ENCODE measurements at regions of chr20 and their contacts with region 1.

Region 1: GRCh38 chr20:32902456-32903420 is 44.0 kb downstream of the EFCAB8 start:
- DNase-seq: peak; percentile 86
- ATAC-seq: peak; percentile 86
- H3K4me3 Mint-ChIP-seq: no peak overlapping the region
- H3K27ac Mint-ChIP-seq: peak overlapping the region; percentile 58
- H3K4me1 Mint-ChIP-seq: peaks cover 25% of the 10 kb centered on the region
- H3K27me3 Mint-ChIP-seq: no peaks in the 10 kb centered on the region

Region 2: GRCh38 chr20:32762149-32762753 is 140.5 kb before region 1 on chr20 and contains the start of gene DNMT3B:
- CTCF ChIA-PET with region 1: no interaction called
- POLR2A ChIA-PET with region 1: no interaction called
- intact Hi-C with region 1: no loop called
- DNase-seq: peak; percentile 81
- ATAC-seq: peak; percentile 74
- H3K4me3 Mint-ChIP-seq: peak within 1 kb of the TSS; percentile 74
- H3K27ac Mint-ChIP-seq: peak within 1 kb of the TSS; percentile 22
- H3K4me1 Mint-ChIP-seq: peaks cover 10% of the 10 kb centered on the region
- H3K27me3 Mint-ChIP-seq: peaks cover 7% of the 10 kb centered on the region
- total RNA-seq, gene DNMT3B: 1.4 to 1.6 TPM

Region 3: DNA sequence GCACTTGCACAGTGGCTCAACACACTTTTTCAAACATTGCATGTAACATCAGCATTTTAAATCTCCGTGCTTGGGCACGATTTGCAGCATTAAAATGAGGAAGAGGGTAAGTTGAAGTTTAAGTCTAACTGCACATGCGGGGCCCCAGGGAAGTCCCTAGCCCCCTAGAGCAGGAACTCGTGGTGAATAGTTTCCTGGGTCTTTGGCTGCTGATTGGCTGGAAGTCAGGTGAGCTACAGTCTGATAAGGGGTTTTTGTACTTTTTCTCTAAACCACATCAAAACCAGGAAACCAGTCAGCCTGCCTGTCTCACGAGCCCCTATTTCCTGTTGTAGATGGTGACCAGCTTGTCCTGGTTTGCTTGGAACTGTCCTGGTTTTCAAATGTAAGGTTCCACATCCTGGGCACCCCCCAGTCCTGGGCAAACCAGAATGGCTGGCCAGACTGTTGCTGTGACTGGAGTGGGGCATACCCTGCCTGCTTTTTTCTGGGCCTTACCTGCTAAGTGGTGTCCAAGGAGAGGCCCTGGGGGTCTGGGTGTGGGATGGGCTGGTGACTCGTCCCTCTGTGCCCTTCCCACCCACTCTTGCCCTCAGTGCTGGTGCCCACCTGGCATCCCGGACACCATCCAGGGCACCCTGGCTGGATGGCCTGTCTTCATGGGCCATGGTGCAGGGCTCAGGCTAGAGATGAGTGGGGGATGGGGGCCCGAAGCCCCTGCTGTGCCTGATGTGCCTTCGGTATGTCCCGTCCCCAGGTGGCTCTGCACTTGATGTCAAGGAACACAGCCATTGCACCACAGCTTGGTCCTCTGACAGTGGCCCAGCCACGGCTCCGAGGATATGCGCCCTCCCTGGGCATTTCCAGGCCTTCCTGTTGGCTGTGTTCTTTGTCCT is 69.7 kb after region 1 on chr20:
- CTCF ChIA-PET with region 1: interaction called, 10 read pairs
- POLR2A ChIA-PET with region 1: interaction called, 4 read pairs
- intact Hi-C with region 1: no loop called
- DNase-seq: peak; percentile 88
- ATAC-seq: peak; percentile 70
- H3K4me3 Mint-ChIP-seq: no peak overlapping the region
- H3K27ac Mint-ChIP-seq: no peak overlapping the region
- H3K4me1 Mint-ChIP-seq: peaks cover 46% of the 10 kb centered on the region
- H3K27me3 Mint-ChIP-seq: no peaks in the 10 kb centered on the region

Region 4: DNA sequence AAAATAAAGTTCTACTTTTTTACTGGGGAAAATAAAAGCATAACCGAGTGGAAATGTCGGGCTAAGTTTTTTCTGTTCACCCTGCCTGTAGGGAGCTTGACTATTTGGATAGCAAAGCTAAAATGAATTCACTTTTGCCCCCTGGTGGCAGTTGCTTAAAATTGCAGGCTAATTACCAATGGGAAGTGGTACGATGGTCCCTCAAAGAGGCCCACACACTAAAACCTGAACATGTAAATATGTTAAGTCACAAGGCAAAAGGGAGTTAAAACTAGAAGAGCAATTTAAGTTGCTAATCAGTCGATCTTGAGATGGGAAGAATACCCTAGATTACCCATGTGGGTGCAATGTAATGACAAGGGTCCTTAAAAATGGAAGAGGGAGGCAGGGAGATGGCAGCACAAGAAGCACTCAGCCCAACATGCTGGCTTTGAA is 102.4 kb after region 1 on chr20:
- CTCF ChIA-PET with region 1: interaction called, 43 read pairs
- POLR2A ChIA-PET with region 1: no interaction called
- intact Hi-C with region 1: loop called (anchors 1 kb)
- DNase-seq: peak; percentile 59
- ATAC-seq: peak; percentile 78
- H3K4me3 Mint-ChIP-seq: no peak overlapping the region
- H3K27ac Mint-ChIP-seq: no peak overlapping the region
- H3K4me1 Mint-ChIP-seq: peaks cover 14% of the 10 kb centered on the region
- H3K27me3 Mint-ChIP-seq: no peaks in the 10 kb centered on the region

Region 5: DNA sequence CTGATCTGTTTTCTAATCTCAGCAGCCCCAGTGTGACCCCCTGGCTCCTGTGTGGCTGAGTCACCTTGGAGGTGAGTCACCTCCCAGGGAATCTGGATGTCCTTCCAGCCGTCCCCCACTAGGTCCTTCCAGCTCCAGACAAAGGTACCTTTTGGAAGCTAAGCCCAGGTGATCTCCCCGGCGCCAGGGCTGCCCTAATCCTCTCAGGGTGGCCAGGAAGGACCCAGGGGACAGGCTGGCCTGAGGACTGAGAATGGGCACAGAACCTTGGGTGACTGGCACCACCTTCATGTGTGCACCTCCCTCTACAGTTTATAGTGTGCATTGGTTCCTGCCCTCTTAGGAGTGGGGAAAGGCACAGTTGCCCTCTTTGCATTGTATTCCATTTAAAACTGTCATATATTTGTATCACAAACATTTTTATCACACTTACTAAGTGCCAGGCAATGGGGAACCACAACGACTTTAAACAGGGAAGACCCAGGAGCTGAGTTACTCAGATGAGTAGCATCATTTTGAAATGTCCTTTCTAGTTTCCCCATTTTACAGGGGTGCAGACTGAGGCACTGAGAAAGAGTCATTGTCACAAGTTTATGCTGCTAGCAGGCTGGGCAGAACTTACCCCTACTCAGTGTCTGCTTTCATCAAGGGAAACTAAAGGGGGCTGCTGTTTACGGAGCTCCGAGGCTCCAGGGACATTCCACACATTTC is 174.1 kb after region 1 on chr20:
- CTCF ChIA-PET with region 1: interaction called, 3 read pairs
- POLR2A ChIA-PET with region 1: no interaction called
- intact Hi-C with region 1: loop called (anchors 1 kb)
- DNase-seq: peak; percentile 14
- ATAC-seq: no peak
- H3K4me3 Mint-ChIP-seq: no peak overlapping the region
- H3K27ac Mint-ChIP-seq: no peak overlapping the region
- H3K4me1 Mint-ChIP-seq: peaks cover 2% of the 10 kb centered on the region
- H3K27me3 Mint-ChIP-seq: no peaks in the 10 kb centered on the region

Region 6: DNA sequence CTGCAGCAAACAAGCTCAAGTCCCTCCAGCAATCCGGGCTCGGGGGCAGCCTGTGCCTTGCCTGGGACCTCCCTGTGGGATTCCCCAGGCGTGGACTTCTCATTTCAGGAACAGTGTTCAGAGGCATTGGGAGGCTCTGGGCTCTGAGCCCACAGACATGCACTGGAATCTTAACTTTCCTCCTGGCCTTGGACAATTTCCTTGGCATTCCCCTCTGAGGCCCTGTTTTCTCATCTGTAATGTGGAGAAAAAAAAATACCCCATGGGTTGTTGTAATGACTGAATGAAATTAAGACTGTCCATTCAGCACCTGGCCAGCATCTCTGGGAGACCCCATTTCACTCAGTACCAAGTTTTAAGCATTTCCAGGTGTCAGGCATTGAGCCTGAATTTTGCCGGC is 194.3 kb after region 1 on chr20:
- CTCF ChIA-PET with region 1: interaction called, 16 read pairs
- POLR2A ChIA-PET with region 1: no interaction called
- intact Hi-C with region 1: loop called (anchors 1 kb)
- DNase-seq: no peak
- ATAC-seq: no peak
- H3K4me3 Mint-ChIP-seq: no peak overlapping the region
- H3K27ac Mint-ChIP-seq: no peak overlapping the region
- H3K4me1 Mint-ChIP-seq: peaks cover 2% of the 10 kb centered on the region
- H3K27me3 Mint-ChIP-seq: no peaks in the 10 kb centered on the region

Region 7: DNA sequence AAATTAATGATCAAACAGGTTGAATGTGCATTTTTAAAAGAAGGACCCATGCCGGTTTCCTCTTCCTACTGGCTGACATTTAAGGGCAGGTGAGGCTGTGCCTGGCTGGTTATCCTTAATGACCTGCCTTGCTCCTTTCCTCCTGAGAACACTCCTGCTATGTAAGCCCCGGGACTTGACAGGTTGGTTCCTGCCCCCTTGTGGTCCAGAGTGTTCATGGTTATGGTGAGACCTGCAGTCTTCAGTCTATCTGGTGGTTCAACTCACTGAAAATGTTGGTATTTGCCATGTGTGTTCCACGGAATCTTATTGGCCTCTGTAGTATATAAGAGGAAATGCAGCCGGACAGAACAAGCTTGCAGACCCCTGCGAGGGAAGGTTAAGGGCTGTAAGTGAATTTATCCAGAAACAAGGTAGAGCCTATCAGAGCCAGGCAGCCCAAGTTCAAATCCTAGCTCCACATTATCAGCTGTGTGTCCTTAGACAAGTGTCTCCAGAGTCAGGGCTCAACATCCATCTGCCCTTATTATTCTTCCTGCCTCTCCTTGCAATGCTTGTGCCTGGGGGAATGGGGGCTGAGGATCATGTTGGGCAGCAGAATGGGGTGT is 309.2 kb after region 1 on chr20:
- CTCF ChIA-PET with region 1: no interaction called
- POLR2A ChIA-PET with region 1: no interaction called
- intact Hi-C with region 1: loop called in 1 of 2 experiments (anchors 2 kb)
- DNase-seq: peak; percentile 53
- ATAC-seq: peak; percentile 44
- H3K4me3 Mint-ChIP-seq: no peak overlapping the region
- H3K27ac Mint-ChIP-seq: no peak overlapping the region
- H3K4me1 Mint-ChIP-seq: no peaks in the 10 kb centered on the region
- H3K27me3 Mint-ChIP-seq: peaks cover 34% of the 10 kb centered on the region

Region 8: GRCh38 chr20:33299111-33299603 is 396.4 kb after region 1 on chr20:
- CTCF ChIA-PET with region 1: interaction called, 3 read pairs
- POLR2A ChIA-PET with region 1: no interaction called
- intact Hi-C with region 1: loop called (anchors 1 to 2 kb)
- DNase-seq: peak; percentile 84
- ATAC-seq: peak; percentile 90
- H3K4me3 Mint-ChIP-seq: no peak overlapping the region
- H3K27ac Mint-ChIP-seq: no peak overlapping the region
- H3K4me1 Mint-ChIP-seq: no peaks in the 10 kb centered on the region
- H3K27me3 Mint-ChIP-seq: peaks cover 6% of the 10 kb centered on the region